ENCODE measurements at regions of chr2 and their contacts with region 1.

Region 1: DNA sequence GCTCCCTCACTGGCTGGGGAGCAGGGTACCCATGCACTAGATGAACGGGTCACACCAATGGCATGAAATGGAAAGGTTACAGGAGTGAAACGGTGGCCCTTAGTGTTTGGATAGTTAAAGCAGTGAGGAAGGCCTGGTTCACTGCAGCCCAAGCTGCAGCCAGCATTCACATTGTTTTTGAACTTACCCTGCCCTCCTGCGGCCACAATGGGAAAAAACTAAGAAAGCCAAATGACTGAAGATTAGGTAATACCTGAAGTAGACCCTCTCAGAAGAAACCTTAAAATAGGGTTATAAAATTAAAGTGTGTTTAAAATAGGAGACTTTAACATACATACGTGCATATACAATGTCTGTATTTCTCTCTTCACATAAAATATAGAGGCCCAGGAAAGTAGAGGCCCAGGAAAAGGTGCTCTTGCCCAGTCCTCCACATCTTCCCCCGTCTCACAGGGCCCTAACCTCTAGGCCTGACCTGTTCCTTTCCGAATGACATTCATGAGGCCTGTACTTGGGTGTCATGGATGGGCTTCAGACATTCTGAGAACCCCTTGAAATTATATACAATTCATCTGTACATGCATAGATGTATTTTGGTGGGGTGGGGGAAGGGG is 33.3 kb downstream of the DOK1 start:
- DNase-seq: peak; percentile 76
- H3K4me3 ChIP-seq: peak overlapping the region in 1 of 2 experiments; percentile 22; a peak in 1 of 4 replicates
- H3K27ac ChIP-seq: peak overlapping the region in 1 of 2 experiments; percentile 40; a peak in 1 of 4 replicates
- H3K4me1 ChIP-seq: peaks cover 4 to 13% of the 10 kb centered on the region in 2 experiments; a peak in 2 of 4 replicates
- H3K27me3 ChIP-seq: no peaks in the 10 kb centered on the region
- CTCF ChIP-seq: peak; percentile 85
- EP300 ChIP-seq: no peak
- RAD21 ChIP-seq: peak; percentile 97

Region 2: GRCh38 chr2:74250189-74250631 is 337.6 kb before region 1 on chr2:
- CTCF ChIA-PET with region 1: interaction called, 14 read pairs
- POLR2A ChIA-PET with region 1: no interaction called
- DNase-seq: peak; percentile 85
- H3K4me3 ChIP-seq: no peak overlapping the region
- H3K27ac ChIP-seq: no peak overlapping the region
- H3K4me1 ChIP-seq: no peaks in the 10 kb centered on the region
- H3K27me3 ChIP-seq: no peaks in the 10 kb centered on the region
- CTCF ChIP-seq: peak; percentile 88
- EP300 ChIP-seq: no peak
- RAD21 ChIP-seq: peak; percentile 81

Region 3: GRCh38 chr2:74498500-74499266 is 89.1 kb before region 1 on chr2:
- CTCF ChIA-PET with region 1: interaction called, 19 read pairs
- POLR2A ChIA-PET with region 1: interaction called, 4 read pairs
- DNase-seq: peak; percentile 49
- H3K4me3 ChIP-seq: peak overlapping the region in 1 of 2 experiments; percentile 24; a peak in 2 of 4 replicates
- H3K27ac ChIP-seq: no peak overlapping the region
- H3K4me1 ChIP-seq: peaks cover 0 to 22% of the 10 kb centered on the region in 2 experiments; a peak in 1 of 4 replicates
- H3K27me3 ChIP-seq: no peaks in the 10 kb centered on the region
- CTCF ChIP-seq: no peak
- EP300 ChIP-seq: no peak
- RAD21 ChIP-seq: no peak

Region 4: DNA sequence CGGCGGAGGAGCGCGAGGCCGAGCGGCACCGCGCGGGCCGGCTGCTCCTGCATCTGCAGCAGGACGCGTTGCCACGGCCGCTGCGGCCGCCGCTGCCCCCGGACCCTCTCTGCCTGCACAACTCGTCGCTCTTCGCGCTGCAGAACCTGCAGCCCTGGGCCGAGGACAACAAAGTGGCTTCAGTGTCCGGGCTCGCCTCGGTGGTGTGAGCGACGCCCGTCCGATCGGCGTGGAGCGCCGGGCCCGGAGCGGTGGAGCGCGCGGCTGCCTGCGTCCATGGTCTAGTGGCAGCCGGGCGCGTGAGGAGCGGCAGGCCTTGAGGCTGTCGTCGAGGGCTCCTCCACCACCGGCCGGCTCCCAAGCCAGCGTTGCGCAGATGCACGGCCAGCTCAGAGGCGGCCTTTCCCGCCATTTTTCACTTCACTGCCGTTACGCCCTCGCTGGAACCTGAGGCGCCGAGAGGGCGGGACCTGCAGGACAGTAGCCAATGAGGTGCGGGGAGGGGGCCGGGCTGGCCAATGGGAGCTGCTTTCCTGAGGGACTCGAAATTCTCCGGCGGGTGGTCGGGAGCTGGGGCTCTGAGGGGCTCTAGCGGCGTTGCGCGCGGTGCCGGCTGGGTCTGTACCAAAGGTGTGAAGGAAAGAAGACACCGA is 71.7 kb before region 1 on chr2:
- CTCF ChIA-PET with region 1: interaction called, 14 read pairs
- POLR2A ChIA-PET with region 1: no interaction called
- DNase-seq: peak; percentile 72
- H3K4me3 ChIP-seq: no peak overlapping the region; a peak in 1 of 4 replicates
- H3K27ac ChIP-seq: no peak overlapping the region
- H3K4me1 ChIP-seq: peaks cover 9 to 18% of the 10 kb centered on the region in 2 experiments; a peak in 1 of 4 replicates
- H3K27me3 ChIP-seq: no peaks in the 10 kb centered on the region
- CTCF ChIP-seq: no peak
- EP300 ChIP-seq: no peak
- RAD21 ChIP-seq: no peak

Region 5: DNA sequence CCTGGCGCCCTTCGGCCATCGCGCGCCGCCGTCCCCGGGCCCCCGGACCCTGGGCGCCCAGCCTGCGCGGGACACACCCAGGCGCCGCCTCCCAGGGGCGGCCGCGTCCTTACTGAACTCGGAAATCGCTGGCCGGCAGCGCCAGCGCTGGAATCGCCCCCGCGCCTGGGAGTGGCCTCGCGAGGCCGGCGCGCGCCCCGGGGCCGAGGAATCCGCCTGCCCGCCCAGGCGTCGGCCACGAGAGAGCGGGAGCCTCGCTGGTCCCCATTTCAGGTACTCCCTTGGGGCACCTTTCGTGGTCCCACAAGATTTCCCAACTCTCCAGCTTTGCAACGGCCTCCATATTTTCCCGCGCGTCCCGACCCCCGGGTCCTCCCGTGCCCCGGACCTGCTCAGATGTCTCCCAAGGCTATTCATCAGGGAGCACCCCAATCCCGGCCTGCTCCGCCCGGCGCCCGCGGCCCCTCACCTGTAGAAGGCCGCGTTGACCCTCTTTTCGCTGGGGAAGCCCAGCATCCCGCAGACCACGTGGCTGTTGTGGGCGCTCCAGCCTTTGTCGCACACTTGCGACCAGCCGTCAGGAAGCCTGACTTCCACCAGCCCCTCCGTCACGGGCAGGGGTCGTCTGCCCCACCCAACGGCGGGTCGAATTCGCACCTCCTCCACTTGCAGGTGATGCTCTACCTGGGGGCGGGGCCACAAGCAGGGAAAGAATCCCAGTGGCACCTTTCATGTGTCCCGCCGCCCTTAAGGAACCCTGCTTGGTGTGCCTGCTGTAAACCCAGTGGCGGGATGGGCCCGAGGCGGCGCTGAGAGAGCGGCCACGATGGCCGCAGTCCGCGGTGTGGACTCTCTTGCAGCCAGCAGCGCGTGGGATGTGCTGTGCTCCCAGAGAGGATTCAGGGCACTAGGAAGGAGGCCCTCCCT is 38.6 kb before region 1 on chr2:
- CTCF ChIA-PET with region 1: interaction called, 19 read pairs
- POLR2A ChIA-PET with region 1: no interaction called
- DNase-seq: peak; percentile 92
- H3K4me3 ChIP-seq: peak overlapping the region; percentile 52 to 60
- H3K27ac ChIP-seq: peak overlapping the region in 1 of 2 experiments; percentile 77; a peak in 2 of 4 replicates
- H3K4me1 ChIP-seq: peaks cover 9 to 37% of the 10 kb centered on the region in 2 experiments; a peak in 3 of 4 replicates
- H3K27me3 ChIP-seq: no peaks in the 10 kb centered on the region
- CTCF ChIP-seq: no peak
- EP300 ChIP-seq: no peak
- RAD21 ChIP-seq: no peak

Region 6: GRCh38 chr2:74566754-74567085 is 21.1 kb before region 1 on chr2:
- CTCF ChIA-PET with region 1: interaction called, 24 read pairs
- POLR2A ChIA-PET with region 1: no interaction called
- DNase-seq: no peak
- H3K4me3 ChIP-seq: no peak overlapping the region
- H3K27ac ChIP-seq: peak overlapping the region; percentile 86 to 93; a peak in 3 of 4 replicates
- H3K4me1 ChIP-seq: peaks cover 3 to 27% of the 10 kb centered on the region in 2 experiments; a peak in 2 of 4 replicates
- H3K27me3 ChIP-seq: no peaks in the 10 kb centered on the region
- CTCF ChIP-seq: no peak
- EP300 ChIP-seq: peak; percentile 40 to 76; a peak in 3 of 4 replicates
- RAD21 ChIP-seq: no peak

Region 7: DNA sequence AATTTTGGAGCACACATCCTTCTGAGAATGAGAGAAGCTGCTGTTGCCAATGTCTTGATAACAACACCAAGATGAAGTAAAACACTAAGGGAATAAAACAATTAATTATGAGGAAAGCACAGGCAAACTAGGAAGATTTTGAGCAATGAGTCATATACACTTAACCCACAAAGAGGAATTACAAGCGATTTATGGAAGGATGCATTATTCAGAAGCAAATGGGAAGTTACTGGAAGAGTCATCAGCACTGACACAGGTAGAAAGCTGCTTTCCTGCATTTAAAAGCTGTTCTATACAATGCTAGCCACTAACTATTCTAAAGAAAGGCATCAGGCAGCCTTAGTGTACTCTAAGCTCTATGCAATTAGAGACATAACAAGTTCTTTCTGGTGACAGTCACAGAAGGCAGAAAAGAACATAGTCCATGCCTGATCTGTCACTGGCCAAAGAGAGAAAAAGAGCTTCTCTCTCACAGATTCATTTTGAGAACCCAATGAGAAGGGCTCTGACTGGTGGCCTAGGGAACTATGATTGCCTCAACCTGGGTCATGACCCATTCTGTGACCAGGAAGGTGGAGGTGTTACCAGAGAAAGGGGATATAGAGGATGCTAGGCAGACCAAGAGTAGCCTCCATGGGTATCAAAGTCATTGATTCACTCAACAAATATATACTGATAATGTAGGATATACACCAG is 15.0 kb after region 1 on chr2:
- CTCF ChIA-PET with region 1: interaction called, 17 read pairs
- POLR2A ChIA-PET with region 1: no interaction called
- DNase-seq: no peak
- H3K4me3 ChIP-seq: no peak overlapping the region
- H3K27ac ChIP-seq: peak overlapping the region in 1 of 2 experiments; percentile 89; a peak in 2 of 4 replicates
- H3K4me1 ChIP-seq: peaks cover 3 to 4% of the 10 kb centered on the region in 2 experiments; a peak in 3 of 4 replicates
- H3K27me3 ChIP-seq: peaks cover 9% of the 10 kb centered on the region; the same call in 1 of the 2 replicates
- CTCF ChIP-seq: no peak
- EP300 ChIP-seq: no peak
- RAD21 ChIP-seq: no peak

Measured in SK-N-SH (cell line).